Left ventricle myocardium superior (tissue), 1 donor: ENCODE measurements at regions of chr5 and their contacts with region 1.

Region 1: DNA sequence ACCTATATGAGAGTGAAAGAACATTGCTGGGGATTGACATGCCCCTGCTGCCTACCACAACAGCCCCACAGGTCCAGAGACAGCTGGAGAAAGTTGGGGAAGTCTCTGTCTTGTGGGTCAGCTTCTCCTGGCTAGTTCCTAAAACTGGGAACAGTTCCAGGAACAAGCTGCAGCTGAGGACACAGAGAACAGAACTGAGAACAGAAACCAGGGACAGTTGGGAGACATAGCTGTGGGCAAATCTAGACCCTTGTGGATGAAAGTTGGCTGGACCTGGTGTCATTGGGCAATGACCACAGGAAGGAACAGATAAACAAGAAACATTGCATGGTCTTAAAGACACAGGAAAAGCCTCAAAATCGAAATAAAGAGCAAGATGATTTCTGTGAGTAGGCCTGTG is 58.3 kb upstream of the MOCS2 start:
- DNase-seq: peak; percentile 51
- ATAC-seq: peak; percentile 95

Region 2: DNA sequence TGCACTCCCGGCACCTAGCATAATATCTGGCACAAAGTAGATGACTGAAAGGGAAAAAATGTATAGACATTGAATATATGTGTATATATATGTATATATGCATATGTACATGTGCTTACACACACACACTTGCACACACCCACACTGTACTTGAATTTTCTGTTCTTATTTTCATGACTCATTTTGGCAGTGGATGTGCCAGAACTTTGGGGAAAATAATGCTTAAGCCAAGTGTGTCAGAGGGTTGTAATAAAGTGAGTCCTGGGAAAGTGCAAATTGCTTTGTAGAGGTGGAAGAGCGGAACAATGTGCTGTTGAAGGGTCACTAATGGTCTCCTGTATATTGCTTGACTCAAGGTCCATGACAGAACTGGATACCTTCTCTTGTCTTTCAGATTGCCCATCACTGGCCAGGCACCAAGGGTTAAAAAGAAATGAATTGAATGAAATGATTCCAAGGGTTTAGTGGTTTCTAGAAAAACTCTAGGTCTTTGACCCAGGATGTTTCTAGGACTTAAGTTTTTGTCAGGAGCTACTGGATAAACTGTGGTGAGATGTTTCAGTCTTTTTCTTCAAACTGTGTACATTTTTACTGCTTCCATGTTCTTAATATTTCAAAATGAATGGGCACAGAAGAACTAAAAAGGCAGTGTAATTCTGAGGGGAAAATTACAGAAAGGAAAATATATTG is 71.6 kb after region 1 on chr5:
- intact Hi-C with region 1: no loop called
- DNase-seq: no peak
- ATAC-seq: no peak

Region 3: GRCh38 chr5:53323943-53324642 is 156.3 kb after region 1 on chr5:
- intact Hi-C with region 1: no loop called
- DNase-seq: no peak
- ATAC-seq: no peak

Region 4: GRCh38 chr5:54229041-54229780 is 1061.4 kb after region 1 on chr5:
- intact Hi-C with region 1: loop called (anchors 10 kb)
- DNase-seq: peak; percentile 79
- ATAC-seq: peak; percentile 74